HAP-1 (cell line): ENCODE measurements at regions of chr9 and their contacts with region 1.

Region 1: GRCh38 chr9:116149844-116150243 is 3.7 kb upstream of the PAPPA start:
- DNase-seq: peak in 1 of 2 experiments; percentile 56
- H3K4me3 ChIP-seq: no peak overlapping the region
- H3K4me1 ChIP-seq: no peaks in the 10 kb centered on the region
- H3K27me3 ChIP-seq: peaks cover 34% of the 10 kb centered on the region

Region 2: GRCh38 chr9:115591584-115591984 is 558.3 kb before region 1 on chr9:
- in situ Hi-C with region 1: loop called (anchors 25 kb)
- DNase-seq: peak; percentile 66 to 87
- H3K4me3 ChIP-seq: no peak overlapping the region
- H3K4me1 ChIP-seq: no peaks in the 10 kb centered on the region
- H3K27me3 ChIP-seq: peaks cover 2% of the 10 kb centered on the region; the same call in 1 of the 2 replicates

Region 3: DNA sequence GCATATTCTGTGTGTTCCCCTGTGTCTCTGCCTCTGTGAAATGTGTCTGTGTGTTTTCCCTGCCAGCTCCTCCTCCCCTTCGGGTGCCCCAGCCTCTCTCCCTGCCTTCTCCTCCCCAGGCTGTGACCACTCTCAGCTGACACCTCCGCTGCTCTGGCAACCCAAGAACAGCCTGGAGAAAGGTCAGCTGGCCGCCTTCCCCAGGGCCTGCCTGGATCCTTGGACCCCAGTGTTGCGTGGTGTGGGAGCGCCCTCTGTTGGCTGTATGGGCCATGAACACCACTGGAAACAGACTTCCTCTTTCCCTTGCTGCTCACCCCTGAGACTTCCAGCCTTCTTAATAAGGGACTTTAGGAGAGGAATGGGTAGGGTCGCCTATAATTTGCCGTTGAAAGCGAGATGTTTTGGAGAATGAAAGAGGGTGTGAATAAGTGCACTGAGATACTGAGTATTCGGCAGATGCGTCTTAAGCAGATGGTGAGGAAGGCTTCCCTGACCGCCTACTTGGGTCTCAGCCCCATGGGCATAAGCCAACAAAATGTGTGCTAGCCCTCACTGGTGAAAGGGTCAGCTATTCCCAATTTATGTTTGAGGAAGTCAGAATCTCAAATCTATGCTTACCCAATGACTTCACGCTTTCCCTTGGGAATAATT is 422.4 kb after region 1 on chr9:
- in situ Hi-C with region 1: loop called (anchors 10 kb)
- DNase-seq: peak; percentile 53 to 82
- H3K4me3 ChIP-seq: no peak overlapping the region
- H3K4me1 ChIP-seq: peaks cover 18% of the 10 kb centered on the region
- H3K27me3 ChIP-seq: no peaks in the 10 kb centered on the region

Region 4: GRCh38 chr9:116661037-116661954 is 511.5 kb after region 1 on chr9:
- in situ Hi-C with region 1: loop called (anchors 25 kb)
- DNase-seq: peak; percentile 31 to 78
- H3K4me3 ChIP-seq: no peak overlapping the region
- H3K4me1 ChIP-seq: no peaks in the 10 kb centered on the region
- H3K27me3 ChIP-seq: no peaks in the 10 kb centered on the region